Posterior cingulate gyrus (tissue), 11 donors: ENCODE measurements at regions of chr1 and their contacts with region 1.

Region 1: DNA sequence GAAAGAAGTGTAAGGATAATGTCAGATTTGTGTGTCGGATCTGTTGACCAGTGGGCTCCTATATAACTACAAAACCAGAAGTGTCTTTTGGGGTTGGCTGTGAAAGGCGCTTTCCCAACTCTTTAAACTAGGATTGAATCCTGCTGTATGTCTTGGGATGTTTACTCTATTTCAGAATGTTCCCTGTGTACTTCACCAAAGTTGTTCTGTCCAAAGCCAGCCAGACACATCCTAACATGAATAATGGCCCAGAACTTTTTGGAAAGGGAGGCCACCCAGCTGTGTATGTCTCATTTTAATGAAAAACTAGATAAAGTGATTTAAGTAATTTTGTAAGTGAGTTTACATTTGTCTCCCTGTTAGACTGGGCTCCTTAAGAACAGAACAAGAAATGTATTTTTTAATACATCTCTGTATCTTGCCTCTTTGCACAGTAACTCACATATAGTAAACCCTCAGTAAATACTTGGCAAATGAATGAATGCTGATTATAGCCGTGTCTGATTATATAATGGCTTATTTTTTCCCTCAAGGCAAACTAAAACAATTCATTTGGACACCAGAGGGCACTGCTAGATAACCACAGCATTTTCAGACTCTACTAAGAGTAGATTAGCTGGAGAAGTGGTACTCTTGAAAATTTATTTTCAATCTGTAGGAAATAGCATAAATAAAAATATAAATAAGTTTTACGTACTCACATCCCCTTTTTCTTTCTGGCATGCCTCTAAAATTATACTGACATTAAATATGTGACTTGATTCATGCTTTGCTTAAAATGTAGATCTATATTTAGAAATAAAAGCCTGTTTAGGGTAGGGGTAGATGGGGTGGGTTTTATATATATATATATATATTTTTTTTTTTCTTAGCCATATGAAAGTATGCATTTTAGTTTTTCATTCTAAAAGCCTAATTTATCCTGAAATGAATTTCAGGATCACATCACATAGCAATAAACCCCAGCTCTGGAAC is 23.8 kb downstream of the TSEN15 start:
- DNase-seq: peak in 2 of 10 donors; percentile 12 to 26

Region 2: GRCh38 chr1:183970516-183971300 is 104.6 kb before region 1 on chr1:
- intact Hi-C with region 1: no loop called
- DNase-seq: no peak

Region 3: GRCh38 chr1:184037849-184038591 is 37.3 kb before region 1 on chr1:
- intact Hi-C with region 1: no loop called
- DNase-seq: no peak

Region 4: DNA sequence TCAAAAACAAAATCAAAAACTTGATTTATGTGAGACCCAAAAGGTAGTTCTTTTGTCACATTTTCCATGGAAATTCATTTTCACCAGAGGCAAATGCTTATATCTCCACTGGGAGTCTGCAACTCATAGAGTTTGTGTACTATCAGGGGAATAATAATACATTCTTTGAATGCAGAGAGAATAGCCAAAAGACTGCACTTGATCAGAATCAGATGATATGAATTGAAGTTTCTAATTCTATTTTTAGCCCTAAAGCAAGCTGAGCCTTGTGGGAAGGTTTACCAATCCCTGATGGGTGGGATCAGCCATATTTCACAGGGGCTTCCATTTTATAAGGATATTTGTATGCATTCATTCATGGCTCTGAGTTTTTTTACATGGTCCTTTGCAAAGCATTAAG is 25.8 kb after region 1 on chr1:
- intact Hi-C with region 1: no loop called
- DNase-seq: no peak

Region 5: GRCh38 chr1:184222652-184223052 is 147.3 kb after region 1 on chr1:
- intact Hi-C with region 1: loop called (anchors 2 kb)
- DNase-seq: peak in 8 of 10 donors; percentile 23 to 89 (median 62)

Region 6: DNA sequence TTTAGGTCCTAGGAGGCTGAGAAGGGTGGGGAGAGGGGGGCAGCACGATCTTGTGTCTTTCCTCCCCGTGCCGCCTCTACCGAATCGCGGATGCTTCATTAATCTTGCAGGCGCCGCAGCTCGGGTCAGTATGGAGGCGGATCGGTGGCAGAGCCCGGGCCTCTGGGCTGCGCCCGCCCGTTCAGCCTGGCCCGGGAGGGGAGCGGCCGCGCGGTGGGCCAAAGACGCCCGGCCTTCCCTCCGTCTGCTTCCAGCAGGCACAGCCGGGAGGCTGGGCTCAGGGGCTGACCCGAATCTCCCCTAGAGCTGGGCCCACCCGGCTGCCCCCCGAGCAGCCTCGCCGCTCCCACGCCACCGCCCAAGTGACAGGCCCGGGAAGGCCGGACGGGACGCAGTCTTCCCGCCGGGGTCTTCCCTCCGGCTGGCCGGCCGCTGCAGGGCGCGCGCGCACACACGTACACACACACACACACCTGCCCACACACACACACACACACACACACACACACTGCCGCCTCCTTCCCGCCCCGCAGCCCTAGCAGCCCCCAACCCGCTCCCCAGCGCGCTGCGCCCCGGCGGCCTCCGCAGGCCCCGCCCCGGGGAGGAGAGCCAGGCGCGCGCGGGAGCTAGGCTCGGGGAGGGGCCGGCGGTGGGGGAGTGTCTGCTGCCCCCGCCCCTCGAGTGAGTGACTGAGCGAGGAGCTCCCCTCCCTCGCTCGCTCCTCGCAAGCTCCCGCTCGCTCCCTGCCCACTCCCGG is 311.1 kb after region 1 on chr1 and contains the start of gene C1orf21:
- intact Hi-C with region 1: loop called (anchors 10 kb)
- DNase-seq: peak; percentile 65 to 98 (median 88)

Region 7: GRCh38 chr1:184563308-184563707 is 488.0 kb after region 1 on chr1:
- intact Hi-C with region 1: loop called (anchors 10 kb)
- DNase-seq: no peak

Region 8: DNA sequence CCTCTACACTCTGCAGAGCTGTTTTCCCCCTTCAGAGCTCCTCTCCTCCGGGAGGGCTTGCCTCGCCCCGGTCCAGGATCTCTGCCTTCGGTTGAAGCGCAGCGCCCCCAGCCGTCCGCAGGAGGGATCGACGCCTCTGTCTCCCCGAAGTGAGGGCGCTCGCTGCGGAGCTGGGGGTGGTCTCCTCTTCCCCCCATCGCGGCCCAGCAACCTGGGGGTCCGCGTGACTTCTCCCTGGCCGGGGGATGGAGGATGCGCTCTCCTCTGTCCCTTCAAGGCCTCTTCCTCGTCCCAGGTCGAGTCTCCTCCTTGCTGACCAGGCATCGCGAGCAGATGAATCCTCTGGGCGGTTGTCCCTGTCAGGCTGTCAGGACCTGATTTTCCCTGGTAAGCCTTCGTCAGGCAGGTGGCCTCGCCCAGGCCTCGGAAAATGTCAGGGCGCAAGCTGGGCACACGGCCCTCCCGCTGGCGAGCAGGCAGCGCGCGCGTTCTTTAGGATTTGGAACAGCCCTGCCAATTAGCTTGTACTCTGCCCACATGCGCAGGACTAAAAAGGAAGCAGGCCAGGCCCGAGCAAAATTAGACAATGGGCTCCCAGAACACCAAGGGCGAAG is 588.8 kb after region 1 on chr1:
- intact Hi-C with region 1: loop called (anchors 2 kb)
- DNase-seq: peak; percentile 72 to 97 (median 85)

Region 9: DNA sequence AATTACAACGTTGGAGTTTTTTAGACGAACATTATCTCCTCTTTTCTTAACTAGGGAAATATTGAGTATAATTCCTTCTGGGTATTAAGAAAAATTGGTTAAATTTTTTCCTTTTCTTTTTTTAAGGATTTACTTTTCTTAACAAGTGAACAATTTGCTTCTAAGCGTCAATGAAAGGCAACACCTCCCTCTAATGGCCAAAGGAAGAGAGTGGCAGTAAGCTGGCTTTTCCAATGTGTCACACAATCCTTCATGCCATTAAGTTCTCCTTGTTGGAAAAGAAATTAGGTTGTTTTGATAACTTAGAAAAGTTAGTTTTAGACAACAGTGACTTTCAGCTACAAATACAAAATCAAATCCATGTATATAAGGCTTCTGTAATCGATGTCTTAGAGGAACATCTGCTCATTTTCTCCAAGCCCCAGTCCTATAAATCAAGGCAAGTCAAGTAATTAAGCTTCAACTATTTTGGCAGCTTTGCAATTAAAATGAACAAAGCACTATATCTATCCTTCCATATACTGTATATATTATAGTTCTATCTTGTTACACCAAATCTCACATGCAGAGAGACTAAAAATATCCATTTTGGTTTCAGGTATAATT is 616.5 kb after region 1 on chr1:
- intact Hi-C with region 1: loop called (anchors 10 kb)
- DNase-seq: no peak